ENCODE measurements at regions of chr5 and their contacts with region 1.

Region 1: DNA sequence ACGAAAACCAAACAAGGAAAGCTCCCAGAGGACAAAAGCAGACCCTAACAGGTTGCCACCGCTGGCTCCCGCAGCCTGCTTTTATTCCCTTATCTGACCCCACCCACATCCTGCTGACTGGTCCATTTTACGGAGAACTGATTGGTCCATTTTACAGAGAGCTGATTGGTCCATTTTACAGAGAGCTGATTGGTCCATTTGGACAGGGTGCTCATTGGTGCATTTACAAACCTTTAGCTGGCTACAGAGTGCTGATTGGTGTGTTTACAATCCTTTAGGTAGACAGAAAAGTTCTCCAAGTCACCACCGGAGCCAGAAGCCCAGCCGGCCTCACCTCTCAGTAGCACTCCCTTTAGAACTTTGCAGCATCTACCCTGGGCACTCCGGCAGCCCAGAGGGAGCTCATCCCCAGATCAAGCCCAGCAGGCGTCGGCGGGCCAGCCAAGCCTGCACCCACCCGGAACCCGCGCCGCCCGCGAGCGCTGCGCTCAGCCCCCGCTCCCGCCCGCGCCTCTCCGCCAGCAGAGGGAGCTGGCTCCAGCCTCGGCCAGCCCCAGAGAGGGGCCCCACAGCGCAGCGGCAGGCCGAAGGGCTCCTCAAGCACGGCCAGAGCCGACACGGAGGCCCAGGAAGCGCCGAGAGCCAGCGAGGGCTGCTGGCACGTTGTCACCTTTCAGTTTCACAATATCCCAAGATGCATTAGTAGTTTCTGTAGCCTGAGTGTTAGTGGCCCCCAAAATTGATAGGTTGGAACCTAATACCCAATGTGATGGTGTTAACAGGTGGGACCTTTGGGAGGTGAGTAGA is 35.3 kb upstream of the CLPTM1L start:
- DNase-seq: peak; percentile 69
- ATAC-seq: peak; percentile 97
- H3K4me3 Mint-ChIP-seq: peak overlapping the region; percentile 78
- H3K27ac Mint-ChIP-seq: no peak overlapping the region
- H3K4me1 Mint-ChIP-seq: peaks cover 22% of the 10 kb centered on the region
- H3K27me3 Mint-ChIP-seq: peaks cover 5% of the 10 kb centered on the region
- CTCF ChIP-seq: peak; percentile 50

Region 2: GRCh38 chr5:1366514-1366913 is 13.7 kb before region 1 on chr5:
- CTCF ChIA-PET with region 1: interaction called, 8 read pairs
- POLR2A ChIA-PET with region 1: interaction called, 13 read pairs
- intact Hi-C with region 1: loop called (anchors 2 kb)
- DNase-seq: no peak
- ATAC-seq: peak; percentile 90
- H3K4me3 Mint-ChIP-seq: peak overlapping the region; percentile 41
- H3K27ac Mint-ChIP-seq: peak overlapping the region; percentile 72
- H3K4me1 Mint-ChIP-seq: peaks cover 46% of the 10 kb centered on the region
- H3K27me3 Mint-ChIP-seq: peaks cover 7% of the 10 kb centered on the region
- CTCF ChIP-seq: no peak

Region 3: DNA sequence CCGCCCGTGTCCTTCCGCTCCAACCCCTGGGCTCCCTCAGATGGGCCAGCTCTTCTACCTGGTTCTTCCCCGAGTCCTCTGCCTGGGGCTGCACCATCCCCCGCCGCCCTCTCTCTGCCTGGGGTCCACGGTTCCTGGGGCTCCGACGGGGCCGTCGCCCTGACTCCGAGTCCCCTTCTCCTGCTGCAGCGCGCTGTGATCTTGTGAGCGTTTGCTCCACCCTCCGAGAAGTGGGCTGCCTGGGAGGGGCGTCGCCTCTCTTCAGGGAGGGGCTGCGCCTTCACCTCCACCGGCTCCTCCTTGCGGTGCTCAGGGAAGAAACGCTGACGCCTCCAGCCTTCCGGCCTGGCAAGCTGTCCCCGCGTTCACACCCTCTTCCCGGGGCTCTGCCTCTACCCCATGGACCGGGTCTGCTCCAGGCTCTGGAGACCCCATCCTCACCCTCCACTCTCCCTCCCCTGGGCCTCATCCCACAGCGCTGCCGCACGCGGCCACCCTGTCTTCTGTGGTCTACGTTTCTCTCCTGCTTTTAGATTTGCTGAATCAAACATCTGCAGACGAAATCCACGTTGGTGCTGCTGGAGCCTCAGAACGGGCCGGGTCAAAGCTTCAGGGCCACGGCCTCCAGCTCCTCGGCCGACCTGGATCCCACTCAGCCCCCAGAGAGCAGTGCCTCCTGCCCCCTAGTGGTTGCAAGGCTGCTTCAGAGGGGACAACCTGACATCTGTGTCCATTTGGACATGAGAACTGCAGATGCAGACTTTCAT is 87.7 kb after region 1 on chr5:
- CTCF ChIA-PET with region 1: interaction called, 3 read pairs
- POLR2A ChIA-PET with region 1: no interaction called
- intact Hi-C with region 1: loop called (anchors 5 kb)
- DNase-seq: no peak
- ATAC-seq: no peak
- H3K4me3 Mint-ChIP-seq: no peak overlapping the region
- H3K27ac Mint-ChIP-seq: peak overlapping the region; percentile 18
- H3K4me1 Mint-ChIP-seq: peaks cover 15% of the 10 kb centered on the region
- H3K27me3 Mint-ChIP-seq: no peaks in the 10 kb centered on the region
- CTCF ChIP-seq: no peak

Region 4: GRCh38 chr5:1503241-1504068 is 123.2 kb after region 1 on chr5:
- CTCF ChIA-PET with region 1: interaction called, 13 read pairs
- POLR2A ChIA-PET with region 1: interaction called, 4 read pairs
- intact Hi-C with region 1: no loop called
- DNase-seq: peak; percentile 43
- ATAC-seq: peak; percentile 38
- H3K4me3 Mint-ChIP-seq: peak overlapping the region; percentile 80
- H3K27ac Mint-ChIP-seq: peak overlapping the region; percentile 99
- H3K4me1 Mint-ChIP-seq: peaks cover 93% of the 10 kb centered on the region
- H3K27me3 Mint-ChIP-seq: no peaks in the 10 kb centered on the region
- CTCF ChIP-seq: no peak

Region 5: GRCh38 chr5:1564182-1564748 is 184.1 kb after region 1 on chr5:
- CTCF ChIA-PET with region 1: no interaction called
- POLR2A ChIA-PET with region 1: no interaction called
- intact Hi-C with region 1: no loop called
- DNase-seq: no peak
- ATAC-seq: no peak
- H3K4me3 Mint-ChIP-seq: no peak overlapping the region
- H3K27ac Mint-ChIP-seq: no peak overlapping the region
- H3K4me1 Mint-ChIP-seq: no peaks in the 10 kb centered on the region
- H3K27me3 Mint-ChIP-seq: peaks cover 3% of the 10 kb centered on the region
- CTCF ChIP-seq: no peak

Region 6: DNA sequence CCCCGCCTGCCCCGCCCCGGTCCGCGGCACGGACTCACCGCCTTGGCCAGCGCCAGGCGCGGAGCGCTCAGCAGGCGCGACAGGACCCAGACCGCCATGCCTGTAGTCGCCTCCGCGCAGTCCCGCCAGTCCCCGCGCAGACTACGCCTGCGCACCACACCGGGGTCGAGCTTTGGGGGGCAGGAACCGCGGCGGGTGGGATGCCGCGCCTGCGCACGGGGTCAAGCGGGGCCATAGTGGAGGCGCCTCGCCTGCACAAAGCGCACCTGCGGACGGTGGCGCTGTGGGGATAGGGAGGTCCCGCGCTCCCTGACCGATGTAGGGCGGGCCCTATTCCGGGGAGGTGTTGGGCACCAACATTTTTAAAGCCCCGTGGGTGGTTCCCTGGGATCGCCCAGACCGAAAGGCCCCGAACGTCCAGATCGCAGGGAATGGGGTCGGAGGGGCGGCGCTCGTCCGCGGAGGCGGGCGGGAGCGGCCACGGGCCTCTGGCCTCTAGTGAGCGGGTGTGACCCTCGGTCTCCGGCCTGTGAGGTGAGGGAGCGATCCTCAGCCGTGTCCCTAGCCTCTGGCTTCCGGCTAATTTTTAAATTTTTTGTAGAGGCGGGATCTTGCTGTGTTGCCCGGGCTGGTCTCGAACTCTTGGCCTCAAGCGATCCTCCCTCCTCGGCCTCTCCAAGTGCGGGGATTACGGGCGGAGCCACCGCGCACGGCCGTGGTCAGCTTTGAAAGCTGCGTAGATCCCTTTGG is 214.3 kb after region 1 on chr5:
- CTCF ChIA-PET with region 1: interaction called, 3 read pairs
- POLR2A ChIA-PET with region 1: no interaction called
- intact Hi-C with region 1: loop called (anchors 1 kb)
- DNase-seq: peak; percentile 81
- ATAC-seq: peak; percentile 94
- H3K4me3 Mint-ChIP-seq: peak overlapping the region; percentile 82
- H3K27ac Mint-ChIP-seq: peak overlapping the region; percentile 56
- H3K4me1 Mint-ChIP-seq: peaks cover 19% of the 10 kb centered on the region
- H3K27me3 Mint-ChIP-seq: no peaks in the 10 kb centered on the region
- CTCF ChIP-seq: no peak